ENCODE measurements at regions of chr2 and their contacts with region 1.

Region 1: DNA sequence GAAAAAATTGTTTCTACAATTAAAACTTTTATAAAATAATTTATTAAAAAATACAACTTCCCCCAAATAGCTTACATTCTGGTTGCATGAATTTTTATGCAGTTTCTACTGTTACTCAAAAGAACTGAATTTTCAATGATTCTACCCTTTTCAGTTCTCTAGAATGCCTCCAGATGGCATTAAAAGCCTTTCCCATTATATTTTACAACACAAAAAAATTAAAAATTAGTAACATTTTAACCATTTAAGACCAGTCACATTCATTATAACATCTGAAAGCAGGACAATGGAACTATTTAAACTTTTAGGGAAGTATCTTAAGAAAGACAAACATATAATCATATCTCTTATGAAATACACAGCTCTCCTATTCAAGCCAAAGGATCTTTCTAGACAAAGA is 236.0 kb upstream of the REV1 start:
- DNase-seq: no peak
- H3K4me3 Mint-ChIP-seq: no peak overlapping the region
- H3K27ac Mint-ChIP-seq: no peak overlapping the region
- H3K4me1 Mint-ChIP-seq: no peaks in the 10 kb centered on the region
- H3K27me3 Mint-ChIP-seq: peaks cover 14% of the 10 kb centered on the region
- CTCF ChIP-seq: no peak

Region 2: GRCh38 chr2:99818842-99819241 is 93.0 kb after region 1 on chr2:
- CTCF ChIA-PET with region 1: no interaction called
- intact Hi-C with region 1: loop called (anchors 1 kb)
- DNase-seq: no peak
- H3K4me3 Mint-ChIP-seq: no peak overlapping the region
- H3K27ac Mint-ChIP-seq: no peak overlapping the region
- H3K4me1 Mint-ChIP-seq: no peaks in the 10 kb centered on the region
- H3K27me3 Mint-ChIP-seq: peaks cover 57% of the 10 kb centered on the region
- CTCF ChIP-seq: no peak

Region 3: GRCh38 chr2:100562732-100563720 is 837.2 kb after region 1 on chr2 and contains the start of gene PDCL3:
- CTCF ChIA-PET with region 1: no interaction called
- intact Hi-C with region 1: no loop called
- DNase-seq: peak; percentile 96
- H3K4me3 Mint-ChIP-seq: peak within 1 kb of the TSS; percentile 85
- H3K27ac Mint-ChIP-seq: peak within 1 kb of the TSS; percentile 62
- H3K4me1 Mint-ChIP-seq: no peaks in the 10 kb centered on the region
- H3K27me3 Mint-ChIP-seq: no peaks in the 10 kb centered on the region
- CTCF ChIP-seq: no peak
- total RNA-seq, gene PDCL3: 23.0 and 27.8 TPM in 2 replicates